SK-N-SH (cell line): ENCODE measurements at regions of chr16 and their contacts with region 1.

Region 1: GRCh38 chr16:88856828-88857733 is at the starts of genes GALNS and TRAPPC2L:
- DNase-seq: peak; percentile 100
- H3K4me3 ChIP-seq: peak within 1 kb of the TSS; percentile 90 to 98
- H3K27ac ChIP-seq: peak within 1 kb of the TSS; percentile 39 to 75; a peak in 2 of 4 replicates
- H3K4me1 ChIP-seq: peaks cover 5 to 15% of the 10 kb centered on the region in 2 experiments; a peak in 1 of 4 replicates
- H3K27me3 ChIP-seq: no peaks in the 10 kb centered on the region
- CTCF ChIP-seq: no peak
- EP300 ChIP-seq: no peak
- RAD21 ChIP-seq: no peak
- polyA plus RNA-seq, gene GALNS: 13.8 and 16.5 TPM in 2 replicates
- polyA plus RNA-seq, gene TRAPPC2L: 73.9 and 74.4 TPM in 2 replicates

Region 2: DNA sequence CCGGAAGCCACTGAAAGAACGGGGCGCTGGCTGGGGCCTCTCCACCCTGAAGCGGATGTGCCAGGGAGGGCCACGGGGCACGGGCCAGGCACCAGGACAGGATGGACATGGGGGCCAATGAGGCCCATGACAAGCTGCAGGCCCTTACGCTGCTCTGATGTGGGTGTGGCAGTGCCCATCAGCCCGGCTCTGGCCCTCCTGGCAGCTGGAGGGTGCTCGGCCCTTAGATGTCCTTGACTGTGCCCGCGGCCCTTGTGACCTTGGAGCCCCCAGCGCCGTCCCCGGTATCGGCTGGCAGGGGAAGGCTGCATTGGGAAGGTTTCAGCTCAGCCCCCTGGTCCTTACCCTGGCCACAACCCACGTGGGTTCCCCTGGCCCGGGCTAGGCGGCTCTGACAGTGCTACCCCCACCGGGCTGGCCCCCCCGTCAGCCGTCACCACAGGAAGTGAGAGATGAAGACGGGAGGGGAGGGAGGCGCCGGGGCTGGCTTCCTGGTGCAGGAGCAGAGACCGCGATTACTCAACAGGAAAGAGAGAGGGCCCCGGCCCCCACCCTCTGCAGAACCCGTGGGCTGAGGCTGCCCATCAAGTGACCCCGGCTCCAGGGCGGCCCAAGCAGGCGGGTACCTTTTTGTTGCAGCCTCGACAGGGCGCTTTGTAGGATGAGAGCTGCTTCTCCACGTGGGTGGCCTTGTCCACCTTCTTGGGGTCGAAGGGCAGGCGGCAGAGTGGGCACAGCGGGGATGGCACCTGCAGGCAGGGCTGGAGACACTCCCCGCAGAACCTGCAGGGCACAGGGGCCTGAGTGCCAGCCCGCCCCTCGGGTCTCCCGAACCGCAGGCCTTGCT is 156.2 kb before region 1 on chr16:
- CTCF ChIA-PET with region 1: no interaction called
- POLR2A ChIA-PET with region 1: no interaction called
- DNase-seq: no peak
- H3K4me3 ChIP-seq: no peak overlapping the region; a peak in 1 of 4 replicates
- H3K27ac ChIP-seq: peak overlapping the region in 1 of 2 experiments; percentile 44; a peak in 2 of 4 replicates
- H3K4me1 ChIP-seq: peaks cover 8 to 13% of the 10 kb centered on the region in 2 experiments; a peak in 3 of 4 replicates
- H3K27me3 ChIP-seq: no peaks in the 10 kb centered on the region
- CTCF ChIP-seq: no peak
- EP300 ChIP-seq: no peak; a peak in 1 of 4 replicates
- RAD21 ChIP-seq: no peak

Region 3: GRCh38 chr16:88727871-88728270 is 129.2 kb before region 1 on chr16:
- CTCF ChIA-PET with region 1: no interaction called
- POLR2A ChIA-PET with region 1: no interaction called
- DNase-seq: peak; percentile 77
- H3K4me3 ChIP-seq: no peak overlapping the region
- H3K27ac ChIP-seq: peak overlapping the region in 1 of 2 experiments; percentile 51; a peak in 1 of 4 replicates
- H3K4me1 ChIP-seq: peaks cover 4 to 54% of the 10 kb centered on the region in 2 experiments; a peak in 2 of 4 replicates
- H3K27me3 ChIP-seq: no peaks in the 10 kb centered on the region
- CTCF ChIP-seq: no peak
- EP300 ChIP-seq: 0 out of 4 replicates have a peak, but pooled peaks of 1 of the 2 experiments have one; percentile 15
- RAD21 ChIP-seq: no peak

Region 4: GRCh38 chr16:88811769-88812512 is 45.1 kb before region 1 on chr16 and contains the start of gene APRT:
- CTCF ChIA-PET with region 1: interaction called, 42 read pairs
- POLR2A ChIA-PET with region 1: interaction called, 7 read pairs
- DNase-seq: peak; percentile 99
- H3K4me3 ChIP-seq: peak within 1 kb of the TSS; percentile 73 to 74
- H3K27ac ChIP-seq: peak within 1 kb of the TSS; percentile 79 to 91
- H3K4me1 ChIP-seq: peaks cover 10 to 29% of the 10 kb centered on the region in 2 experiments; a peak in 2 of 4 replicates
- H3K27me3 ChIP-seq: no peaks in the 10 kb centered on the region
- CTCF ChIP-seq: peak; percentile 36
- EP300 ChIP-seq: no peak
- RAD21 ChIP-seq: peak; percentile 53
- polyA plus RNA-seq, gene APRT: 178 and 192 TPM in 2 replicates

Region 5: DNA sequence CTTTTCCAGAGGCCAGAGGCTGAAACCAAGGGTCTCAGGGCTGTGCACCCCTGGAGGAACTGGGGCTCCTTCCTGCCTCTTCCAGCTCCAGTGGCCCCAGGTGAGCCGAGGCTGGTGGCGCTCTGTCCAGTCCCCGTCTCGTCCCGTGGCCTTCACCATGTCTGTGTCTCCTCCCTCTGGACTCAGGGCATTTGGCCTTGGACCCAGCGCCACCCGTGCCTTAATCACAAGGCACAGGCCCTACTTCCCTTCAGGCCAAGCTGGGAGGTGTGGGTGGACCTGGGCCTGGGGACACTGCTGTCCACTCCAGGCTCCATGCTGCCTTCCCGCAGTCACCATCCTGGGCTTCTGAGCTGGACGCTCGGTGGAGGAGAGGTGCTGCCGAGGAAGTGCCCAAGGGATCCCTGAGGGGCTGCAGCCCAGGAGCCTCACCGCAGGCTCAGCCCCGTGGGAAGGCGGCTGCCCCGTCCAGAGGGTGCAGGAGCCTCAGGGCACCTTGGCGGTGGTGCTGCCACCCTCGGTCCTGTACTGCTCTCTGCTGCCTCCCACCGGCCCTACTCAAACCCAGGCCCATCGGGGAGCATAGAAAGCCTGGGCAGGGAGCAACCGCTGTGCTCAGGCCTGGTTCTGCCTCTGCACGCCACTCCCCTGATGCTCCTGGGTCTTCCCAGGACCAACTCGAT is 35.8 kb before region 1 on chr16:
- CTCF ChIA-PET with region 1: interaction called, 42 read pairs
- POLR2A ChIA-PET with region 1: interaction called, 3 read pairs
- DNase-seq: no peak
- H3K4me3 ChIP-seq: no peak overlapping the region
- H3K27ac ChIP-seq: no peak overlapping the region
- H3K4me1 ChIP-seq: no peaks in the 10 kb centered on the region
- H3K27me3 ChIP-seq: no peaks in the 10 kb centered on the region
- CTCF ChIP-seq: peak; percentile 12; the same call in 1 of the 2 replicates
- EP300 ChIP-seq: no peak
- RAD21 ChIP-seq: no peak

Region 6: DNA sequence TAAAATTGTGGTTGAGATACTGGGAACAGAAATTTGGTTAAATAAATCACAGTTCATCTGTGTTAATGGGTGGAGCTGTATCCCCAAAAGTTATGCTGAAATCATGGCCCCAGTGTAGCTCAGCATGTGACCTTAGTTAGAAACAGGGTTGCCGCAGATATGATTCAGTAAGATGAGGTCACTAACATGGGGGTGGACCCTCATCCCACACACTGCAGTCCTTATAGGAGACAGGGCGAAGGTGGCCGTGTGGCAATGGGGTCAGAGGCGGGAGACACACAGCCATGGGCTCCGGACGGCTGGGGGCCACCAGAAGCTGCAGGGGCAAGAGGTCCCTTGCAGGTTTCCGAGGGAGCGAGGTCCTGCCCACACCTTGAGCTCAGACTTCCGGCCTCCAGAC is 11.0 kb before region 1 on chr16:
- CTCF ChIA-PET with region 1: interaction called, 14 read pairs
- POLR2A ChIA-PET with region 1: no interaction called
- DNase-seq: no peak
- H3K4me3 ChIP-seq: no peak overlapping the region
- H3K27ac ChIP-seq: no peak overlapping the region
- H3K4me1 ChIP-seq: no peaks in the 10 kb centered on the region
- H3K27me3 ChIP-seq: no peaks in the 10 kb centered on the region
- CTCF ChIP-seq: no peak
- EP300 ChIP-seq: no peak
- RAD21 ChIP-seq: no peak

Region 7: GRCh38 chr16:88869673-88869980 is 12.5 kb after region 1 on chr16:
- CTCF ChIA-PET with region 1: interaction called, 17 read pairs
- POLR2A ChIA-PET with region 1: no interaction called
- DNase-seq: no peak
- H3K4me3 ChIP-seq: no peak overlapping the region
- H3K27ac ChIP-seq: no peak overlapping the region
- H3K4me1 ChIP-seq: no peaks in the 10 kb centered on the region; a peak in 1 of 4 replicates
- H3K27me3 ChIP-seq: peaks cover 69% of the 10 kb centered on the region
- CTCF ChIP-seq: no peak
- EP300 ChIP-seq: no peak
- RAD21 ChIP-seq: no peak

Region 8: GRCh38 chr16:89084411-89084810 is 227.3 kb after region 1 on chr16:
- CTCF ChIA-PET with region 1: no interaction called
- POLR2A ChIA-PET with region 1: no interaction called
- DNase-seq: no peak
- H3K4me3 ChIP-seq: no peak overlapping the region
- H3K27ac ChIP-seq: no peak overlapping the region
- H3K4me1 ChIP-seq: peaks cover 0 to 8% of the 10 kb centered on the region in 2 experiments; a peak in 1 of 4 replicates
- H3K27me3 ChIP-seq: peaks cover 31% of the 10 kb centered on the region
- CTCF ChIP-seq: no peak
- EP300 ChIP-seq: no peak
- RAD21 ChIP-seq: no peak

Region 9: DNA sequence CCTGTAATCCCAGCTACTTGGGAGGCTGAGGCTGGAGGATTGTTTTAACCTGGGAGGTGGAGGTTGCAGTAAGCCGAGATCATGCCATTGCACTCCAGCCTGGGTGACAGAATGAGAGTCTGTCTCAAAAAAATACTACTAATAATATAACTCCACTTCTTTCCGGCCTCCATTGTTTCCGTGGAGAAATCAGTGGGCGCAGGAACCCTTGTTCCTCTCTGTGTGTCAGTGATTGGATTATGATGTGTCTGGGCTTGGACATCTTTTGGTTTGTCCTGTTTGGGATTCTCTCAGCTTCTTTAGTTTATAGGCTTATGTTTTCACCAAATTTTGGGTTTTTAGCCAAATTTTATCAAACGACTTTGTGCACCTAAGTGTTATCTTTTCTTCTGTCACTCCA is 273.4 kb after region 1 on chr16:
- CTCF ChIA-PET with region 1: no interaction called
- POLR2A ChIA-PET with region 1: no interaction called
- DNase-seq: no peak
- H3K4me3 ChIP-seq: no peak overlapping the region
- H3K27ac ChIP-seq: no peak overlapping the region
- H3K4me1 ChIP-seq: no peaks in the 10 kb centered on the region; a peak in 1 of 4 replicates
- H3K27me3 ChIP-seq: no peaks in the 10 kb centered on the region
- CTCF ChIP-seq: no peak
- EP300 ChIP-seq: no peak
- RAD21 ChIP-seq: no peak